ENCODE measurements at regions of chr12 and their contacts with region 1.

Region 1: DNA sequence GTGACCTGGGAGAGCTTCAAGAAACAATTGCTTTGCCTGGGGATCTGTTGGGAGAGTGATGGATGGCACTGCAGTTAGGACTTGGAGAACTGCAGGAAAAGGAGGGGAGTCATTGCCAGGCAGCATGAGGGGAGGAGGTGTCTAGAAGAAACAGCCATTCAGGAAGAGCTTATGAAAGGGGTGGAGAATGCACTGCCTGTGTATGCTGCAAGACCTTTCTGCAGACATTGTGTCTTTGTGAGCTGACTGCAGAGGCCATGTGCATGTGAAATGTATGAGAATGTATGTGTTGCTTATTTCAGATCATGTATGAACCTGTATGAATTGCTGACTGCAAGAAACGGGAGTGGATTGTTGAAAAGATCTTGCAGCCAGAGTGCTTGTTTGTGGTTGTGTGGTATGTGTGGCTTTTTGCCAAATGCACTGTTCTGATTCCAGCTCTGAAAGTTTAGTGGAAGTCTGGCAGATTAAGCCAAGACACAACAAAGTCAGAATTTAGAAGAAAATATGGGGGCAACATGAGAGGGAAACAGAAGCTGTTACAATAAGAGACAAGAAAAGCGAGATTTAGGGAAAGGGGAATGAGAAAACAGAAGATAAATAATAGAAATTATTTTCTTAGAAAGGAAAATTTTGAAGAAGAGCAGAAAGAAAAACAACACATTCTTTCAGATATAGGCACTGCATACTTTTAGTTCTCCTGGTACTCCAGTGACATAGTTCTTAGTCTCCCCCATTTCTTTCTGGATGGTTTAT is 9.8 kb upstream of the RIMKLB start:
- DNase-seq: peak in 1 of 2 donors; percentile 32
- ATAC-seq: peak; percentile 79 to 94 (median 84)
- H3K4me3 ChIP-seq: no peak overlapping the region
- H3K27ac ChIP-seq: no peak overlapping the region
- H3K4me1 ChIP-seq: peaks cover 3 to 28% (median 21%) of the 10 kb centered on the region in 9 donors
- H3K27me3 ChIP-seq: no peaks in the 10 kb centered on the region
- CTCF ChIP-seq: no peak

Region 2: GRCh38 chr12:8709124-8709830 is 21.3 kb after region 1 on chr12:
- intact Hi-C with region 1: no loop called
- DNase-seq: peak; percentile 24 to 29
- ATAC-seq: peak in 7 of 8 donors; percentile 76 to 89 (median 82)
- H3K4me3 ChIP-seq: peak overlapping the region in 9 of 10 donors; percentile 15 to 48 (median 42)
- H3K27ac ChIP-seq: peak overlapping the region in 9 of 10 donors; percentile 35 to 78 (median 49)
- H3K4me1 ChIP-seq: peaks cover 0 to 53% (median 26%) of the 10 kb centered on the region in 9 donors
- H3K27me3 ChIP-seq: no peaks in the 10 kb centered on the region
- CTCF ChIP-seq: no peak

Region 3: GRCh38 chr12:8780389-8780788 is 92.4 kb after region 1 on chr12:
- intact Hi-C with region 1: loop called in 1 of 10 experiments (anchors 5 kb)
- DNase-seq: no peak
- ATAC-seq: peak in 1 of 8 donors; percentile 56
- H3K4me3 ChIP-seq: no peak overlapping the region
- H3K27ac ChIP-seq: no peak overlapping the region
- H3K4me1 ChIP-seq: peaks cover 0 to 32% (median 12%) of the 10 kb centered on the region in 9 donors
- H3K27me3 ChIP-seq: no peaks in the 10 kb centered on the region
- CTCF ChIP-seq: peak in 7 of 9 donors; percentile 20 to 55 (median 35)

Region 4: GRCh38 chr12:8817856-8818255 is 129.8 kb after region 1 on chr12:
- intact Hi-C with region 1: loop called in 5 of 10 experiments (anchors 2 to 10 kb)
- DNase-seq: no peak
- ATAC-seq: no peak
- H3K4me3 ChIP-seq: no peak overlapping the region
- H3K27ac ChIP-seq: no peak overlapping the region
- H3K4me1 ChIP-seq: no peaks in the 10 kb centered on the region
- H3K27me3 ChIP-seq: no peaks in the 10 kb centered on the region
- CTCF ChIP-seq: no peak

Region 5: GRCh38 chr12:8823565-8824300 is 135.7 kb after region 1 on chr12:
- intact Hi-C with region 1: loop called in 4 of 10 experiments (anchors 2 to 10 kb)
- DNase-seq: peak in 1 of 2 donors; percentile 9
- ATAC-seq: peak in 5 of 8 donors; percentile 34 to 67 (median 51)
- H3K4me3 ChIP-seq: no peak overlapping the region
- H3K27ac ChIP-seq: no peak overlapping the region
- H3K4me1 ChIP-seq: no peaks in the 10 kb centered on the region
- H3K27me3 ChIP-seq: no peaks in the 10 kb centered on the region
- CTCF ChIP-seq: peak in 8 of 9 donors; percentile 40 to 70 (median 59)

Region 6: GRCh38 chr12:8849876-8850275 is 161.9 kb after region 1 on chr12:
- intact Hi-C with region 1: loop called in 1 of 10 experiments (anchors 10 kb)
- DNase-seq: no peak
- ATAC-seq: no peak
- H3K4me3 ChIP-seq: no peak overlapping the region
- H3K27ac ChIP-seq: no peak overlapping the region
- H3K4me1 ChIP-seq: peaks cover 0 to 14% (median 2%) of the 10 kb centered on the region in 9 donors
- H3K27me3 ChIP-seq: no peaks in the 10 kb centered on the region
- CTCF ChIP-seq: no peak

Region 7: GRCh38 chr12:8890313-8891085 is 202.5 kb after region 1 on chr12:
- intact Hi-C with region 1: loop called in 6 of 10 experiments (anchors 2 to 10 kb)
- DNase-seq: peak in 1 of 2 donors; percentile 66
- ATAC-seq: peak; percentile 55 to 88 (median 82)
- H3K4me3 ChIP-seq: peak overlapping the region in 9 of 10 donors; percentile 18 to 58 (median 55)
- H3K27ac ChIP-seq: peak overlapping the region in 4 of 10 donors; percentile 36 to 54 (median 44)
- H3K4me1 ChIP-seq: peaks cover 0 to 5% (median 0%) of the 10 kb centered on the region in 9 donors
- H3K27me3 ChIP-seq: no peaks in the 10 kb centered on the region
- CTCF ChIP-seq: peak; percentile 72 to 94 (median 87)

Region 8: DNA sequence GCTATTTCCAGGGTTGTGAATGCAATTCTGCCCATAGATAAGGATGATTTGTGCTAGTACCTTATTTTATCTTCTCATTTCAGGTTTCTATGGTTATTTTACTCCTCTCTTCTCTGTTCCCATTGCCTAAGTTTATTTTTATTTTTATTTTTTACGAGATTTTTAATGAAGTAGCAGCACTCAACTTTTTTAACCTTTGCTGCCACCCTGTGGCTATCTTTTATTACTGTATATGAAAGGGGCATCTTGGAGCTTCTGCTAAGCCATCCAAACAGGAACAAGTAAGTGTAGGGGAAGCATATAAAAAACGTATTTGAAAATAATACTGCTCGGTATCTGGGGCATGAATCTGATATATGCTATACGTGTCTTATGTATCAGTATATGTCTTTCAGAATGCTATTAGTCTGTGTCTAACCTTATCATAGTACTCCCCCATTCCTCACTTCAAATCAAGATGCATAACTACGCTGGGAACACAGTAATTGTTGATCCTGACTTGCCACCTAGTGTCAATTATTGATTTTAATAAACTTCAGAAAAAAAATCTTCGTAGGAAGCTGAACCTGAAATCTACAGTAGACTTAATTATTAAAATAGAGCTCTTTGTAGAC is 361.6 kb after region 1 on chr12:
- intact Hi-C with region 1: loop called in 9 of 10 experiments (anchors 5 to 10 kb)
- DNase-seq: no peak
- ATAC-seq: peak in 3 of 8 donors; percentile 22 to 53 (median 42)
- H3K4me3 ChIP-seq: no peak overlapping the region
- H3K27ac ChIP-seq: no peak overlapping the region
- H3K4me1 ChIP-seq: peaks cover 0 to 4% (median 0%) of the 10 kb centered on the region in 9 donors
- H3K27me3 ChIP-seq: no peaks in the 10 kb centered on the region
- CTCF ChIP-seq: peak in 8 of 9 donors; percentile 9 to 69 (median 60)

Measured in heart right ventricle (tissue), 16 donors.